ENCODE measurements at regions of chr2 and their contacts with region 1.

Region 1: DNA sequence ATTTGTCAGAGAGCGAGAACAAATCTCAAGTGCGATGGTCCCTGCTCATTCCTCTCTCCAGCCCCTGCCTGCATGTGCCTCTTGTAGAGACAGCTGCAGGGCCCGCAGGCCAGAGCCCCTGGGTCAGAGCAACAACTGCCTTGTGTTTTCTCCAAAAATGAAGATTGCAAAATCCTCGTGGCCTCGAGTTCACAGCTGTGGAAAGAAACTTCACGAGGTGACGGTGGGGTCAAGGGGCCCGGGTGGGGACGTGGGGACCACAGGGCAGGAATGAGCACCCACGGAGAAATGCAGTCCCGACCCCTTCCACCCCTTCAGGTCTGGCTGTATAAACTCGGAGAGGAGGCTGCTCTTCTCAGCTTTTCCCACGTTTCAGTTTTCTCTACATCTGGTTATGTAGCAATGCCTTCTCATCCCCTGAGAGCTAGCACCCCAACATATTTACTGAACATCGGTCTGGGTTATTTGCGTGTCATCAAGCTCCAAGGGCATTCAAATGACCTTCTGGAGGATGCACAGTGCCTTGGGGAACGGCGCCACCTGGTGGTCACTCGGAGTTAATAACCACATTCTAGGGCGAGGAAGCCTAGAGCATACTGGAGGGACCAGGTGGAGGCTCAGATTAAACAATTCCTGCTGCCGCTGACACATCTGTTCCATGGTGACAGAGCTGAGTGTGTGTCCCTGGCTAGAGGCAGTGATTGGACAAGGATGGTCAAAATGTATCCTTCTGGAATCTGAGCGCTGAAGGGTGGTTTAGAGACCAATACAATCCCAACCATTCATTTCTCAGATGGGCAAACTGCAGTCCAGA is 91.4 kb upstream of the CYRIA start:
- DNase-seq: peak; percentile 85
- ATAC-seq: peak; percentile 95
- H3K4me3 Mint-ChIP-seq: no peak overlapping the region
- H3K27ac Mint-ChIP-seq: peak overlapping the region; percentile 23
- H3K4me1 Mint-ChIP-seq: no peaks in the 10 kb centered on the region
- H3K27me3 Mint-ChIP-seq: peaks cover 5% of the 10 kb centered on the region

Region 2: GRCh38 chr2:15636972-15637785 is 1119.9 kb before region 1 on chr2:
- CTCF ChIA-PET with region 1: no interaction called
- POLR2A ChIA-PET with region 1: no interaction called
- intact Hi-C with region 1: loop called in 1 of 2 experiments (anchors 5 kb)
- DNase-seq: peak; percentile 77
- ATAC-seq: peak; percentile 89
- H3K4me3 Mint-ChIP-seq: no peak overlapping the region
- H3K27ac Mint-ChIP-seq: no peak overlapping the region
- H3K4me1 Mint-ChIP-seq: peaks cover 6% of the 10 kb centered on the region
- H3K27me3 Mint-ChIP-seq: no peaks in the 10 kb centered on the region

Region 3: DNA sequence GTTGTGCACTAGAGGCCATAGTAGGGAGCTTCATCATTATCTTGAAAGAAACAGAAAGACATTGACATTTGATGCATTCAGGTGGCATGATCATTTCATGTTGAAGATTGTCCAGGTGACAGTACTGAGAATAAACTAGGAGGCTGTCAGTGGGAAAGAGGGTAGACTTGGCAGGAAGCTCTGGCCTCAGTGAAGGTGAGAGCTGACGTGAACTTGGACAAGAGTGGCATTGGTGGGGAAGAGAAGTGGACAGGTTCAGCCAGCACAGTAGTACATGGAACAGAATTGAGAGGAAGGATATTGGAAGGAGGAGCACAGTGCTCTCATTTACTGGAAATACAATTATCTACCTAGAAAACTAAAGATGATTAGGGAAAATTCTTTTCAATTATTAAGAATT is 336.6 kb before region 1 on chr2:
- CTCF ChIA-PET with region 1: no interaction called
- POLR2A ChIA-PET with region 1: no interaction called
- intact Hi-C with region 1: no loop called
- DNase-seq: no peak
- ATAC-seq: no peak
- H3K4me3 Mint-ChIP-seq: no peak overlapping the region
- H3K27ac Mint-ChIP-seq: no peak overlapping the region
- H3K4me1 Mint-ChIP-seq: no peaks in the 10 kb centered on the region
- H3K27me3 Mint-ChIP-seq: peaks cover 4% of the 10 kb centered on the region

Region 4: GRCh38 chr2:16553226-16553625 is 203.8 kb before region 1 on chr2:
- CTCF ChIA-PET with region 1: interaction called, 4 read pairs
- POLR2A ChIA-PET with region 1: no interaction called
- intact Hi-C with region 1: loop called (anchors 1 kb)
- DNase-seq: peak; percentile 40
- ATAC-seq: no peak
- H3K4me3 Mint-ChIP-seq: no peak overlapping the region
- H3K27ac Mint-ChIP-seq: no peak overlapping the region
- H3K4me1 Mint-ChIP-seq: no peaks in the 10 kb centered on the region
- H3K27me3 Mint-ChIP-seq: peaks cover 11% of the 10 kb centered on the region

Region 5: GRCh38 chr2:16617282-16618261 is 139.5 kb before region 1 on chr2:
- CTCF ChIA-PET with region 1: interaction called, 55 read pairs
- POLR2A ChIA-PET with region 1: no interaction called
- intact Hi-C with region 1: loop called (anchors 1 kb)
- DNase-seq: peak; percentile 15
- ATAC-seq: no peak
- H3K4me3 Mint-ChIP-seq: no peak overlapping the region
- H3K27ac Mint-ChIP-seq: no peak overlapping the region
- H3K4me1 Mint-ChIP-seq: peaks cover 11% of the 10 kb centered on the region
- H3K27me3 Mint-ChIP-seq: peaks cover 5% of the 10 kb centered on the region

Region 6: GRCh38 chr2:16700551-16701259 is 56.3 kb before region 1 on chr2:
- CTCF ChIA-PET with region 1: no interaction called
- POLR2A ChIA-PET with region 1: no interaction called
- intact Hi-C with region 1: loop called in 1 of 2 experiments (anchors 2 kb)
- DNase-seq: no peak
- ATAC-seq: no peak
- H3K4me3 Mint-ChIP-seq: no peak overlapping the region
- H3K27ac Mint-ChIP-seq: no peak overlapping the region
- H3K4me1 Mint-ChIP-seq: no peaks in the 10 kb centered on the region
- H3K27me3 Mint-ChIP-seq: peaks cover 15% of the 10 kb centered on the region

Region 7: DNA sequence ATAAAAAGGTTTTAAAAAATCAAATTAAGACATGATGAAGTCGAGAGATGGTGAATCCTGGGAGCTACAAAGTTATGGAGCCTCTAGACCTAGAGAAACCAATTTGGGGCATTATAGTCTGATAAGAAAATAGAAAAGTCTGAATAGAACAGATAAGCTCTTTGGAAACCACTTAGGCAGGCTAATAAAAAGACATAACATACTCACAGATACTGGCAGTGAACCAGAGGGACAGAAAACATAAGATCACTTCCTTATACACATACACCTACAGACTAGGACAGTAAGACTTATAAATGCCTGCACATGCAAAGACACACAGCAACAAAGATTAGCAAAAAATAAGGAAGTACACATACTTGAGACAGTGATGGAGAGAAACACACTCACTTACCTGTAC is 976.6 kb after region 1 on chr2:
- CTCF ChIA-PET with region 1: no interaction called
- POLR2A ChIA-PET with region 1: no interaction called
- intact Hi-C with region 1: no loop called
- DNase-seq: no peak
- ATAC-seq: no peak
- H3K4me3 Mint-ChIP-seq: no peak overlapping the region
- H3K27ac Mint-ChIP-seq: no peak overlapping the region
- H3K4me1 Mint-ChIP-seq: no peaks in the 10 kb centered on the region
- H3K27me3 Mint-ChIP-seq: no peaks in the 10 kb centered on the region

Measured in activated CD4-positive, alpha-beta T cell treated with anti-CD3 and anti-CD28 coated beads for 36 hours (primary cell).